PC-9 (cell line): ENCODE measurements at regions of chrX and their contacts with region 1.

Region 1: DNA sequence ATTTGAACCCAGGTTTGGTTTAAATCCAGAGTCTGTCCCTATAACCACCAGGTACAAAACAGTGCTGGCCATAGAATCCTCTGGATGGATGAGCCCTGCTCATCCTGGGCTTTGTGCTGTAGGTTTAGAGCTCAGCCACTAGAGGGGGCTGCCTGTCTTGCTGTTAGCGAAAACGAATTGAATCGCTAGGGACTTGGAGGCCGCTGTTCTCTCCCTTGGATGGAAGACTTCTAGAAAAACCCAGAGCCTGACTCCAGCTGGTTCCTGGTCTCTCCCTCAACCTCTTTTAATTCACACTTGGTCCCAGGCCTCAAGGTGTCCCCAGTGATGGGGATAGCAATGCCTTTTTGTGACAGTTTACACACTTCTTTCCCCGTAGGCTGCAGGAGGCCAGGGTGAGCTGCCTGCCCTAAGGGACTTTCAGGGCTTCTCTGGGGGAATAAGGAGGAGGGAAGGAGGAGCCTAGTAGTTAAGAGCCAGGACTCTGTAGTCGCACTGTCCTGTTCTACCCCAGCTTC is 8.7 kb downstream of the RIPPLY1 start:
- DNase-seq: peak; percentile 56 to 68
- H3K4me3 ChIP-seq: no peak overlapping the region
- H3K27ac ChIP-seq: peak overlapping the region; percentile 62
- H3K4me1 ChIP-seq: peaks cover 35% of the 10 kb centered on the region
- H3K27me3 ChIP-seq: no peaks in the 10 kb centered on the region
- CTCF ChIP-seq: peak; percentile 86

Region 2: GRCh38 chrX:106611679-106612392 is 282.6 kb before region 1 on chrX and contains the start of gene RADX:
- CTCF ChIA-PET with region 1: no interaction called
- POLR2A ChIA-PET with region 1: no interaction called
- intact Hi-C with region 1: no loop called
- DNase-seq: peak; percentile 46 to 65
- H3K4me3 ChIP-seq: peak within 1 kb of the TSS; percentile 69
- H3K27ac ChIP-seq: no peak within 1 kb of the TSS
- H3K4me1 ChIP-seq: peaks cover 3% of the 10 kb centered on the region; the same call in 1 of the 2 replicates
- H3K27me3 ChIP-seq: no peaks in the 10 kb centered on the region
- CTCF ChIP-seq: no peak
- total RNA-seq, gene RADX: 0.20 and 0.53 TPM in 2 replicates

Region 3: DNA sequence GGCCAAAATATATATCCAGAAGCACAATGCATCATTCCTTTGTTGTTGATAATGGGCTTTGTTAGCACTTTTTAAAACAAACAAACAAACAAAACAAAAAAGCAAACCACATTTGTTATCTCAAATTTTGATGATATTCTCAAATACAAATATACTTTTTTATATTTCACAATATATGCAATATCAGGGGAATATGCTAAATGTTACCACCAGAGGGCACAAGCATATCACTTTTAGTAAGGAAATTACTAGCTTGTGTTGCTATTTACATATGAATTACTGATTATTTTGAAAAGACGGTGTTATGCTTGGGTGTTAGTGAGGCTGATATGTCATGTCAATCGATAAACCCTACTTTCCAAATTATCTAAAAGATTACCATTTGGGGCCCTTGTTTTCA is 20.4 kb before region 1 on chrX:
- CTCF ChIA-PET with region 1: no interaction called
- POLR2A ChIA-PET with region 1: interaction called, 11 read pairs
- intact Hi-C with region 1: no loop called
- DNase-seq: peak in 1 of 2 experiments; percentile 38
- H3K4me3 ChIP-seq: no peak overlapping the region
- H3K27ac ChIP-seq: no peak overlapping the region
- H3K4me1 ChIP-seq: no peaks in the 10 kb centered on the region
- H3K27me3 ChIP-seq: no peaks in the 10 kb centered on the region
- CTCF ChIP-seq: peak; percentile 86

Region 4: DNA sequence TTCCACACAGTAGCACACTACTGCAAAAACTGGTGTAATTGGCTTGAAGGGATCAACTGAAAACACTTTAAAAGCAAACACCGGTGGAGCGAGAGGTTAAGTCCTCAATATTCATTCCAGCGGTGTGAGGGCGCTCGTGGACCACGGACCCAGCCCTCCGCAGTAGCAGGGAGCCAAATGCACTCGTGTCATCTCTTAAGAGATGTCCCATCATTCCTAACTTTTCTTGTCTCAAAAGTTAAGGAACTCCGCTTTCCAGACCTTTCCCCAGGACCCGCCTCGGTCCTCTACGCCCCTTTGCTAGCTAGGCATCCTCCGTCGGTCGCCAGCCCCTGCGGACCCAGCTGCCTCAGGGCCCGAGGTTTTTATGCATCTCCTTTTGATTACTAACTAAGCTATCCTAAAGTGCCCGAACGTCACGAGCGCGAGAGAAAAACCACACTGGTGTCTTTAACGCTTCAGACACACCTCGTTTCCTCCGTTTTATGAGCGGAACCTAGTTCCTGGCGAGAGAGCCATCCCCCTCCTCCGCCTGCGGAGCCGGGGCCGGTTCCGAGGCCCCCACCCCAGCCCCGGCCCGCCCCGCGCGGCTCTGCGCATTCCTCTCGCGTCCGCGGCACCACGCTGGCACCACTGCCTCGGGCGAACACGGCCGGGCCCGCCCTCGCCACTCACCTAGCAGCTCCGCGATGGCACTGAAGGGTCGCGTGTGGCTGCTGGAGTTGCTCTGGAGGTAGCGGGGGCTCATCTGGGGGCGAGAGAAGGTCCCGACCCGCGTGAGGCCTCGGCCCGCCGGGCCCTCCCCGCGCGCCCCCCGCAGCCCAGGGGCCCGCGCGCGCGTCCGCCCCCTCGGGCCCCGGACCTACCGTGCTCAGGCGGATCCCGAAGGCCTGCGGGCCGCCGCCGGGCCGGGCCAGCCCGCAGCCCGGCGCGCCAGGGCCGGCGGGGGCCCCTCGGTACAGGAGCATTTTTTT is 104.8 kb after region 1 on chrX:
- CTCF ChIA-PET with region 1: no interaction called
- POLR2A ChIA-PET with region 1: no interaction called
- intact Hi-C with region 1: loop called (anchors 5 kb)
- DNase-seq: peak; percentile 47 to 48
- H3K4me3 ChIP-seq: peak overlapping the region; percentile 75
- H3K27ac ChIP-seq: no peak overlapping the region
- H3K4me1 ChIP-seq: 0 out of 2 replicates have a peak, but pooled peaks cover 6% of the 10 kb centered on the region
- H3K27me3 ChIP-seq: no peaks in the 10 kb centered on the region
- CTCF ChIP-seq: peak; percentile 66

Region 5: GRCh38 chrX:107537815-107538214 is 643.4 kb after region 1 on chrX:
- CTCF ChIA-PET with region 1: no interaction called
- POLR2A ChIA-PET with region 1: no interaction called
- intact Hi-C with region 1: loop called (anchors 10 kb)
- DNase-seq: peak; percentile 40 to 52
- H3K4me3 ChIP-seq: no peak overlapping the region
- H3K27ac ChIP-seq: no peak overlapping the region
- H3K4me1 ChIP-seq: peaks cover 3% of the 10 kb centered on the region; the same call in 1 of the 2 replicates
- H3K27me3 ChIP-seq: no peaks in the 10 kb centered on the region
- CTCF ChIP-seq: peak; percentile 88

Region 6: DNA sequence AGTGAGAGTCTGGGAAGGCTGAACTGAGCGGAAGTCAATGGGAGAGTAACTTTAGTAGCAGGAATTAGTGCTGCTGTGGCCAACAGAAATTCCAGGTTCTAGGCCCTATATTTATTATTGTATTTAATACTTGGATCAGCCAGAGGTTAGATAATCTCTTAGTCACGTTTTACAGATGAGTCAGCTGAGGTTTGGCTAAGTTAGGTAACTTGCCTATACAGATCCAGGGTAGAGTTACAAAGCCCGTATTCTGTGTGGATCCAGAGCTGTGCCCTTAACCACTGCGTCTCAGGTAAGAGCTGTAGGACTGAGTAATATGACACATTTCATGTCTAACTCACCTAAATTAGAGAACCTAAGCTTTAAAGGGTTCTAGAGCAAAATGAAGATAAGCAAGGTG is 1176.4 kb after region 1 on chrX:
- CTCF ChIA-PET with region 1: no interaction called
- POLR2A ChIA-PET with region 1: no interaction called
- intact Hi-C with region 1: loop called (anchors 5 kb)
- DNase-seq: peak; percentile 19 to 73
- H3K4me3 ChIP-seq: no peak overlapping the region
- H3K27ac ChIP-seq: peak overlapping the region; percentile 44; the same call in 1 of the 2 replicates
- H3K4me1 ChIP-seq: peaks cover 19% of the 10 kb centered on the region
- H3K27me3 ChIP-seq: no peaks in the 10 kb centered on the region
- CTCF ChIP-seq: no peak